ENCODE measurements at regions of chr1 and their contacts with region 1.

Region 1: DNA sequence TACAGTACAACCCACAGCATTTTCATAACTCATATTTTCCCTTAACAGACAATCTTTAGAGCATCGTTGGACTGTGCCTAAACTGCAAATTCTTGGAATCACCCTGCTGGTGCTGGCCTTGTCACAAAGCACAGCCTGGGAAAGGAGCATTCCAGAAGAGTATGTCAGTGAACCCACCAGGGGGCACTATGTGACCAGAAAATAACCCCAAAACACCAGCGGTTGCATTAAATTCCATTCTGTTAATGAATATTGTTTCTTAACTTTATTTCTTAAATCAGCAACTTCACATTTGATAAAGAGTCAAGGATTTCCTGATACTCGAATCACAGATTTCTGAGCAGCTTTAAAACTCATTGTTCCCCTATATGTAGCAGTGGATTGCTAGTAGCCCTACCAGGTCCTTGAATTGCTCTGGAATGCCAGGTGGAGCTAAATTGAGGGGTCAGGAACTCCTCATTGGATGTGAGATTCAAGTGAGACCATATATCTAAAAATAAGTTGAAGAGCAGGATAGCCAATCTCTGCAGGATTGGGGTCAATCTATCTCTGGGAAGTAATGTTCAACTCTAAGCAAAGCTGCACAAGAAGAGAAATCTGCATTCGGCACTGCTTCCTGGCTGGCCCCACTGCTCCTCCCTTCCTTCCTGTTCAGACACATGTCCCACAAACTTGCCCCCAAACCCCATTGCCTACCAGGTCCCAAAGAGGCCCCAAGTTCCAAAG is 12.7 kb upstream of the RAB4A start:
- DNase-seq: peak; percentile 32
- H3K4me3 Mint-ChIP-seq: no peak overlapping the region
- H3K27ac Mint-ChIP-seq: no peak overlapping the region
- H3K4me1 Mint-ChIP-seq: peaks cover 24% of the 10 kb centered on the region
- H3K27me3 Mint-ChIP-seq: peaks cover 2% of the 10 kb centered on the region

Region 2: GRCh38 chr1:228734881-228735801 is 523.1 kb before region 1 on chr1 and contains the start of gene RHOU:
- intact Hi-C with region 1: loop called (anchors 5 kb)
- DNase-seq: peak; percentile 58
- H3K4me3 Mint-ChIP-seq: peak within 1 kb of the TSS; percentile 75
- H3K27ac Mint-ChIP-seq: peak within 1 kb of the TSS; percentile 12
- H3K4me1 Mint-ChIP-seq: peaks cover 5% of the 10 kb centered on the region
- H3K27me3 Mint-ChIP-seq: peaks cover 63% of the 10 kb centered on the region
- total RNA-seq, gene RHOU: 0.18 and 0.28 TPM in 2 replicates

Region 3: GRCh38 chr1:229341774-229342655 is 83.8 kb after region 1 on chr1:
- intact Hi-C with region 1: no loop called
- DNase-seq: peak; percentile 81
- H3K4me3 Mint-ChIP-seq: peak overlapping the region; percentile 94
- H3K27ac Mint-ChIP-seq: peak overlapping the region; percentile 89
- H3K4me1 Mint-ChIP-seq: peaks cover 47% of the 10 kb centered on the region
- H3K27me3 Mint-ChIP-seq: peaks cover 14% of the 10 kb centered on the region

Region 4: DNA sequence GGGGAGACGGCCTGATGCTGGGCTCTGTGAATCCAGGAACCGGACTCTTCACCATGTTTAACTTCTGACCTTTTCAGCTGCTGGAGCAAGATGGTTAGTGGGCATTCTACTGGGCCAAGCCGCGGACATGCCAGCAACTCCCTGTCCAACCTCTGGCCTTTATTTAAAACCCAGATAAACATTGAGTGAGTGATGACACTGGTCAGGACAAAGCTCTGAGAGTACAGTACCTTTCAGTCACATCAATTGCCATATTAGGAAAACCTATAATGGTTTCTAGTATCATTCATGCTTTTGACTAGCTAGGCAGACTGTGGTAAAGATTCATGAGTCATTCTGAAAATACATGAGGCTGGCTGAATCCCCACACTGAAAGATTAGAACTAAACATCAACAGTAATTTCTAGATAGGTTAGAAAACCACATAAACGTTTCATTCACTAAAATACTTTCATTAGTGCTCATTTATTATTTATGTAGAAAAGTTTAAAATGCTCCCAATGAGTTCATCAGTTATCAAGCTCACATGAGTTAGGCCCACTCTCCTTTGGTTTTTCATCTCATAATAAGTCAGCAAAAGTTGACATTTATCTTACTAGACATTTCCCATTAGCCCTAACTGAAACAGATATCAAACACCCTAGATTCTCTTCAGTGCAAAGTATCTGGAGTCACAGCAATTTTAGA is 182.8 kb after region 1 on chr1:
- intact Hi-C with region 1: loop called (anchors 2 kb)
- DNase-seq: peak; percentile 28
- H3K4me3 Mint-ChIP-seq: no peak overlapping the region
- H3K27ac Mint-ChIP-seq: peak overlapping the region; percentile 53
- H3K4me1 Mint-ChIP-seq: peaks cover 22% of the 10 kb centered on the region
- H3K27me3 Mint-ChIP-seq: peaks cover 22% of the 10 kb centered on the region

Region 5: DNA sequence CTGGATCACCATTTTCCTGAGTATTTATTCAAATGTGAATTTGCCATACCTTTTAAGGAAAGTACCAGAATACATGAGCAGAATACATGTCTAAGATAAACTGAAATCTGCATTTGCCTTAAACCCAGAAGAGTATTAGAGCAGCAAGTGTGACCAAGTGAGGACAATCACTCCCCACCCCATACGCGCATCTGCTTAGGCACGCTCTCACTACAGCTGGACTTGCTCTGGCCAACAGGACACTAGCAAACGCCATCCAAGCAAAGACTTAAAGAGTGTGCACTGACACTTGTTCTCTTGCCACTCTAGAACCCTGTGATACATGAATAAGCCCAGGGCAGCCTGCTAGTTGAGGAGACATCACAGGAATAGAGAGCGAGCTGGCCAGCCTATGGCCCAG is 224.3 kb after region 1 on chr1:
- intact Hi-C with region 1: loop called (anchors 1 kb)
- DNase-seq: no peak
- H3K4me3 Mint-ChIP-seq: no peak overlapping the region
- H3K27ac Mint-ChIP-seq: no peak overlapping the region
- H3K4me1 Mint-ChIP-seq: peaks cover 14% of the 10 kb centered on the region
- H3K27me3 Mint-ChIP-seq: no peaks in the 10 kb centered on the region

Region 6: GRCh38 chr1:229514578-229515275 is 256.5 kb after region 1 on chr1:
- intact Hi-C with region 1: loop called (anchors 1 kb)
- DNase-seq: peak; percentile 25
- H3K4me3 Mint-ChIP-seq: no peak overlapping the region
- H3K27ac Mint-ChIP-seq: no peak overlapping the region
- H3K4me1 Mint-ChIP-seq: peaks cover 4% of the 10 kb centered on the region
- H3K27me3 Mint-ChIP-seq: no peaks in the 10 kb centered on the region

Region 7: DNA sequence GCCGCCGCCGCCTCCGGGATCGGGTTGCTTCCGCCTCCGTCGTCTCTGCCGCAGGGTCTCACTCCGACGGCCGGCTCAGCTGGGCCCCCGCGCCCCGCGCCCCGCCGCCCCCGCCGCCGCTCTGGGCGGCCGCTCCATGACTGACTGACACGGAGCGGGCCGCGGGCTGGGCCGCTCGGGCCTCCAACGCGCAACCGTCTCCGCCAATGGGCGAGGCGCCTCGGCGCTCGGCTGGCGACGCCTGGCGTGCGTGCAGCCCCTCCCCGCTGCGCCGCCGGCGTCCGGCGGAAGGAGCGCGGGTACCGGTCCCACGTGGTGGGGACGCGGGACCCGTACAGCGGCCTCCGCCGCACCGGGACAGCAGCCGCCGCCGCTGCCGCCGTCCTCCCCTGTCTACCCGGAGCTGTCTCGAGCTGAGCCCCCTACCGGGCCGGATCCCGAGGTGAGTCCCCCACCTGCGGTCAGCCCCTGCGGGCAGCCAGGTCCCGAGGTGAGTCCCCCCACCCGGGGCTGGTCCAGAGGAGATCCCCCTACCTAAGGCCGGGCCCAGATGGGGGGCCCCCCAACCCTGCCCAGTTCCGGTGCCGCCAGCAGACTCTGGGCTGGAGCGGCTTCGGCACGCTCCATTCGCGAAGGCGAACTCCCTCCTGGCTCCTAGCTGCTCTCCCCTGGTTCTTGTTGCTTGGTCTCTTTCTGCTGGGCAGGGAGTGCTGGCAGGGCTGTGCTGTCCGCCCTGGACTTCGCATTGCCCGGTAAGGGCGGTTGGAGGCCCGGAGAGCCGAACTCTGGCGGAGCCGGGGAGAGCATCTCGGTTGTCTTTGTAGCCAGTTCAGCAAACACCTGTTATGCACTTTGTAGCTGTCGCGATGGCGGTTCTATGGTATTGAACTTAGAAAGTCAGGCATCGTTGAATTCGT is 368.0 kb after region 1 on chr1 and contains the starts of genes TAF5L and URB2:
- intact Hi-C with region 1: loop called (anchors 10 kb)
- DNase-seq: peak; percentile 84
- H3K4me3 Mint-ChIP-seq: peak within 1 kb of the TSS; percentile 96
- H3K27ac Mint-ChIP-seq: peak within 1 kb of the TSS; percentile 85
- H3K4me1 Mint-ChIP-seq: peaks cover 49% of the 10 kb centered on the region
- H3K27me3 Mint-ChIP-seq: no peaks in the 10 kb centered on the region
- total RNA-seq, gene TAF5L: 28.3 and 28.4 TPM in 2 replicates
- total RNA-seq, gene URB2: 25.8 and 27.0 TPM in 2 replicates

Measured in activated T-helper 2 cell treated with anti-CD3 and anti-CD28 coated beads, Interferon-gamma antibody, Interleukin-2, Interleukin-4, amounts not matched to agents 10 μg/mL and 5 μg/mL and 100 μg/mL, durations not matched to agents 14 hours and 24 hours and 36 hours (primary cell).